Thyroid gland (tissue), 4 donors: ENCODE measurements at regions of chr14 and their contacts with region 1.

Region 1: DNA sequence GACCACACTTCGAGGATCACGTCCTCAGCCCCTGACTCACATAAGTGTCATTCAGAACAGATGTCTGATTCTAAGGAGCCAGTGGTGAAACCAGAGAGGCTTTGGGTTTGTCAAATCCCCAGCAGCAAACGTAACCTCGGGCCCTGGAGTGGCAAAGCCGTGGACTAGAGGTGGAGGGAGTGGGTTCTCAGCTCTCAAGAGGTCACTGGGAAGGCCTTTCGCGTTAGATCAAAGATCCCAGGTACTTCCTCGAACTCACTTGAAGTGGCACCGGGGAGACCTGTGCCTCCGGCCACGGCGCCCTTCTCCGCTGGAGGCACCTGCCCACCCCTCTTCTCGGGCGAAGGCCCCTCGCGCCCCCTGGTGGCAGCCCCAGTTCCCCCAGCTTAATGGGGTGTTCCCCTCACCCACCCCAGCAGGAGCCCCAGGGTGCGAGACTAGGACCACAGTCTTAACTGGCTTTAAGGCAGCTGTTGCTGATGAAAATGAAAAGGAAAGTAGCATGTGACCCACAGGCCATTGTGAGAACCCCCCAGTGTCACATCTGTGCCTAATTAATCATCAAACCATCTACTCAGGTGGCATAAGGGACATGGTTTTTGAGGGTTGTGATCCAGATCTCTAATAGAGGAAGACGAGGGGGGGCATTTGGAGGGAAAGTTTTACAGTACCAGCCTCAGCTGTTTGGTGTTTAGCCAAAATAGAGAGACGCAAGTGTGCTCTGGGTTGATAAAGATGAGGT is 672 bp upstream of the ESR2 start:
- DNase-seq: peak; percentile 81 to 87
- H3K4me3 ChIP-seq: peak overlapping the region in 2 of 3 donors; percentile 30
- H3K27ac ChIP-seq: no peak overlapping the region
- H3K4me1 ChIP-seq: peaks cover 3 to 14% of the 10 kb centered on the region in 2 donors
- H3K27me3 ChIP-seq: no peaks in the 10 kb centered on the region
- CTCF ChIP-seq: peak; percentile 75 to 85 (median 82)
- POLR2A ChIP-seq: no peak

Region 2: DNA sequence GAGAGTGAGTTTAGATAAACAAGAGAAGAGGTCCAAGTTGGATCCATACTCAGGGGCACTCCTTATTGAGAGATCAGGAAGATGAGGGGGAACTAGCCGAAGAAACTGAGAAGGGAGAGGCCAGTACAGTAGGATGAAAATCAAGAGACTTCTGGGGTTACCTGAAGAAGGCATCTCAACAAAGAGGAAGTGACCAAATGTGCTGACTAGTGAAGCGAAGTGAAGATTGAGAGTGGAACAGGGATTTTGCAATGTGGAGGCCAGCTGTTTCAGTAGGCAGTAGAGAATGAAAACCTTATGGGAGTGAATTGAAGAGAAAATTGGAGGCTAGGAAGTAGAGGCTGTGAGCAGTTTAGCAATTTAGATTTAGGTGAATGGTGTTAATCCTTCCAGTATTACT is 289.0 kb before region 1 on chr14:
- intact Hi-C with region 1: loop called (anchors 10 kb)
- DNase-seq: peak; percentile 43 to 50
- H3K4me3 ChIP-seq: no peak overlapping the region
- H3K27ac ChIP-seq: peak overlapping the region in 1 of 3 donors; percentile 33
- H3K4me1 ChIP-seq: peaks cover 6% of the 10 kb centered on the region in 2 donors
- H3K27me3 ChIP-seq: no peaks in the 10 kb centered on the region
- CTCF ChIP-seq: no peak
- POLR2A ChIP-seq: no peak

Region 3: GRCh38 chr14:64147126-64147790 is 147.6 kb before region 1 on chr14:
- intact Hi-C with region 1: loop called (anchors 10 kb)
- DNase-seq: no peak
- H3K4me3 ChIP-seq: no peak overlapping the region
- H3K27ac ChIP-seq: no peak overlapping the region
- H3K4me1 ChIP-seq: no peaks in the 10 kb centered on the region
- H3K27me3 ChIP-seq: no peaks in the 10 kb centered on the region
- CTCF ChIP-seq: no peak
- POLR2A ChIP-seq: no peak

Region 4: DNA sequence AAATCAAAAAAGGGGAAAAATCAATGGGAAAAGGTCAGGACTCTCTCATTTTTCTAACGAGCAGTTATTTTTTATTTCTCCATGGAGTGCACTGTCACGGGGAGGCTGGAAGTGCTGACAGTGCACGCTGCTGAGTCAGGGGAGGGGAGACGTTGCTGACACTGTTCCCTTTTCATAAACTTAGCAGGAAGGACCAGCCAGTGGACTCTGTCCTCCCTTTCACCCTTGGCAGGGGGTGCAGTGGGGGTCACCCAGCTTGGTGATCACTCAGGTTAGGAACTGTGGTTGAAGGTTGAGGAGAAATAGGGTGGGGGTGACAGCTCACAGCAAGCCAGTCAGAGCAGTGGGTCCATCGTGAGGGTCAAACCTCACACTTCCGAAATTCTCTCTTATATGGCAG is 1052.1 kb after region 1 on chr14:
- intact Hi-C with region 1: no loop called
- DNase-seq: no peak
- H3K4me3 ChIP-seq: no peak overlapping the region
- H3K27ac ChIP-seq: no peak overlapping the region
- H3K4me1 ChIP-seq: no peaks in the 10 kb centered on the region
- H3K27me3 ChIP-seq: no peaks in the 10 kb centered on the region
- CTCF ChIP-seq: no peak
- POLR2A ChIP-seq: no peak